Keratinocyte (primary cell): ENCODE measurements at regions of chr4 and their contacts with region 1.

Region 1: GRCh38 chr4:20773144-20773997 is 73.1 kb downstream of the PACRGL start:
- DNase-seq: no peak
- H3K4me3 ChIP-seq: no peak overlapping the region
- H3K27ac ChIP-seq: no peak overlapping the region
- H3K4me1 ChIP-seq: peaks cover 3% of the 10 kb centered on the region
- H3K27me3 ChIP-seq: no peaks in the 10 kb centered on the region
- CTCF ChIP-seq: peak; percentile 66 to 78 (median 72)

Region 2: GRCh38 chr4:21134994-21135393 is 361.6 kb after region 1 on chr4:
- dilution Hi-C with region 1: loop called (anchors 25 kb)
- DNase-seq: no peak
- H3K4me3 ChIP-seq: no peak overlapping the region
- H3K27ac ChIP-seq: no peak overlapping the region
- H3K4me1 ChIP-seq: no peaks in the 10 kb centered on the region
- H3K27me3 ChIP-seq: no peaks in the 10 kb centered on the region
- CTCF ChIP-seq: peak in 2 of 3 experiments; percentile 22 to 39